WTC11 (cell line): ENCODE measurements at regions of chr9 and their contacts with region 1.

Region 1: GRCh38 chr9:121545875-121546423 is 46.3 kb upstream of the GGTA1 start:
- DNase-seq: peak; percentile 98
- ATAC-seq: peak; percentile 93
- H3K4me3 Mint-ChIP-seq: peak overlapping the region; percentile 33; the same call in 1 of the 2 replicates
- H3K27ac Mint-ChIP-seq: no peak overlapping the region
- H3K4me1 Mint-ChIP-seq: peaks cover 8% of the 10 kb centered on the region
- H3K27me3 Mint-ChIP-seq: peaks cover 17% of the 10 kb centered on the region
- CTCF ChIP-seq: peak; percentile 85

Region 2: GRCh38 chr9:121566481-121567465 is 20.8 kb after region 1 on chr9:
- CTCF ChIA-PET with region 1: interaction called, 16 read pairs
- POLR2A ChIA-PET with region 1: no interaction called
- DNase-seq: no peak
- ATAC-seq: no peak
- H3K4me3 Mint-ChIP-seq: no peak overlapping the region
- H3K27ac Mint-ChIP-seq: peak overlapping the region; percentile 48; the same call in 1 of the 2 replicates
- H3K4me1 Mint-ChIP-seq: peaks cover 20% of the 10 kb centered on the region
- H3K27me3 Mint-ChIP-seq: 0 out of 2 replicates have a peak, but pooled peaks cover 3% of the 10 kb centered on the region
- CTCF ChIP-seq: no peak

Region 3: DNA sequence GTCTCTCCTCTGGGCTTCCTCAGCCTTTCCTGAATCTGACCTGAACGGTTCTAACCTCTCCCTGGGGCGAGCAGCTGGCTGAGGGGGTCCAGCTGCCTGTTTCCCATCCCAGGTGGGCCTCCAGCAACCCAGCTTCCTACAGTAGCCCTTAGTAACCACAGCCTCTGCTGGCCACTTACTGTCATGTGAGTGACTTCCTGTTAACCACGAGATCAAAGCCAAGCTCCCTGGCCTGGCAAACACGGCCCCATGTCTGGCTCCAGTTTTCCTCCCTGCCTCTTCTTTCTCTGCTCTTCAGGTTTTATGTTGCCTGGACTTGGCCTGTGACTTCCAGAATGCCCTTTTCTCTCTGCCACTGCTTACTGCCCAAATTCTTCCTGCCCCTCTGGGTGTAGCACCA is 58.3 kb after region 1 on chr9:
- CTCF ChIA-PET with region 1: interaction called, 38 read pairs
- POLR2A ChIA-PET with region 1: no interaction called
- DNase-seq: no peak
- ATAC-seq: no peak
- H3K4me3 Mint-ChIP-seq: no peak overlapping the region
- H3K27ac Mint-ChIP-seq: peak overlapping the region; percentile 93; the same call in 1 of the 2 replicates
- H3K4me1 Mint-ChIP-seq: peaks cover 40% of the 10 kb centered on the region
- H3K27me3 Mint-ChIP-seq: peaks cover 14% of the 10 kb centered on the region
- CTCF ChIP-seq: no peak

Region 4: DNA sequence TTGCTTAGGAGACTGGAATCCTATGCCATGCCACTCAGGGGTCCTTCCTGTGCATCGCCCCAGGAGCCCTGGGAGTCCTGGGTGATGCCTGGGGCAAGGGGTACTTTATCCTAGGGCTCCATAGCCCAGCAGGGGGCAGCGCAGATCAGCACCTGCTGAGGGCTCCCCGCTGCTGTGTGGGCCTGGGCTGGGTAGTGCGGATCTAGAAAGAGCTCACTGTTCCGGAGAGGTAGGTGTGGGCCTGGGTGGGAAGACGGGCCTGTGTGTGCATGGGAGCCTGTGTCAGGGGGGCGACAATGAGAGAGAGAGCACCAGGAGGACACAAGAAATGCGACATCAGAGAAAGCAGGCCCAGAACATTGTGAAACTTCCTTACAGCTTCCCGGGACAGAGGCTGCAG is 94.1 kb after region 1 on chr9:
- CTCF ChIA-PET with region 1: interaction called, 19 read pairs
- POLR2A ChIA-PET with region 1: no interaction called
- DNase-seq: peak; percentile 76
- ATAC-seq: peak; percentile 75
- H3K4me3 Mint-ChIP-seq: no peak overlapping the region
- H3K27ac Mint-ChIP-seq: 0 out of 2 replicates have a peak overlapping the region, but pooled peaks have one; percentile 23
- H3K4me1 Mint-ChIP-seq: peaks cover 40% of the 10 kb centered on the region
- H3K27me3 Mint-ChIP-seq: no peaks in the 10 kb centered on the region
- CTCF ChIP-seq: no peak; the same call in 1 of the 2 replicates

Region 5: DNA sequence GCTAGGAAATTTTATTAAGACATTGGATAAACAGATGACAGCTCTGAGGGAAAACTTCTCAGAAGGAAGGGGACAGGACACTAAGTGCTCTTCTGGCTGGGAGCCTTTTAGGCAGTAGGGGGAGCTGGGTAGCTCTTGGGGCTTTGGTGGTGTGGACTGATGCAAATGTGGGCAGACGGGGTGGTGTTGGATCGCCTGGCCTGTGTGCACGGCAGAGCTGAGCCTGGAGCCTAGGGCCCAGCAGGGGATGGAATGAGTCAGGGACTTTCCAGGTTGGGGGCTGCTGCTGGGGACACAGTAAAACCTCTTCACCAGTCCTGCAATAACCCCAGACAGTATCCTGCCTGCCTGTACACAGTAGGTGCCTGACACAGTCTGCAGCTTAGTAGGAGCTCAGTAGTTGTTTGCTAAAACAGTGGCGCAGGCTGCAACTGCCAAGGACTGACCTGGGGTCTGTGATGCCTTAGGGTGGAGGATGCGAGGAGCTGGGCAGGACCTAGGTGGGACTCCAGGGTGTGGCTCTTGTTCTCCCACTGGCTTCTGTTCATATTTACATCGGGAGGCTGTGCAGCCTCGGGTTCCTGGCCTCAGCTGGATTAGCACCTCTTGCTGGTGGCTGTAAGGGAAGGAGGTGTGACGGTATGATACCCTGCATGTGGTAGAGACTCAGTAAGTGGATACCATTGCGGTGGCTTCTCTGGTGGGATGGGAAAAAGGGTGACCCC is 189.3 kb after region 1 on chr9:
- CTCF ChIA-PET with region 1: interaction called, 25 read pairs
- POLR2A ChIA-PET with region 1: no interaction called
- DNase-seq: peak; percentile 76
- ATAC-seq: peak; percentile 81
- H3K4me3 Mint-ChIP-seq: peak overlapping the region; percentile 85
- H3K27ac Mint-ChIP-seq: peak overlapping the region; percentile 86
- H3K4me1 Mint-ChIP-seq: peaks cover 66% of the 10 kb centered on the region
- H3K27me3 Mint-ChIP-seq: peaks cover 3% of the 10 kb centered on the region; the same call in 1 of the 2 replicates
- CTCF ChIP-seq: no peak; the same call in 1 of the 2 replicates

Region 6: DNA sequence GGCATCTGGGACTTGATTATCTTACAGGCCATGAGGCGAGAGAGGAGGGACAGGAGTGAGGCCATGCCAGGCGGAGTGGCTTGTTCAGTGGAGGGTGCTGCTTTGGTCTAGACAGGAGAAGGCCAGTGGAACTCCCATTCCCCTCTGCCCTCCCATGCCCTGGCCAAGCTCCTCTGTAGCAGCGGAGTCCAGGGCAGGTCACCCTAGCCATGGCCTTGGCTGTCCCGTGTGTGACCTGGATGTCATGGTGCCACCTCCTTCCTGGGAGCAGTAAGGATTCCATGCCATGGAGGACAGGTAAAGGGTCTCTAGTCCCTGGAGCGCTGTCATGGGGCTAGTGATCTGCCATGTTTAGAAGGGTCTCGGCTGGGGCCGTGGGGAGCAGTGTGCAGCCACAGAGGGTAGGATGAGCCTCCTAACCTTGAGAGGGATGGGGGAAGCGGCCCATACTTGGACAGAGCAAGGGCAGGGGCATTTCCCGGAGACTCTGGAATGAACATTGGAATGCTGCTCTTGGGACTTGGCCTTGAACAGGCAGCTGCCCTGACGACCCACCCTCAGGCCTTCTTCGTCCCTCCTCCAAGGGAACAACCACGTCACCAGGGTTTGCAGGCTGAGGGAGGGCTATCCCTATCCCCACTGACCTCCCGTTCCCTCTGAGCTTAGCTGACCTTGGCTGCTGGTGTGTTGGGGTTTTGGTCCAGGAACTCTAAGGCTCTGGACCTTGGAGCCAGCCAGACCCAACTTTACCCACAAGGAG is 205.9 kb after region 1 on chr9:
- CTCF ChIA-PET with region 1: no interaction called
- POLR2A ChIA-PET with region 1: no interaction called
- DNase-seq: no peak
- ATAC-seq: no peak
- H3K4me3 Mint-ChIP-seq: no peak overlapping the region
- H3K27ac Mint-ChIP-seq: peak overlapping the region; percentile 60
- H3K4me1 Mint-ChIP-seq: 0 out of 2 replicates have a peak, but pooled peaks cover 2% of the 10 kb centered on the region
- H3K27me3 Mint-ChIP-seq: no peaks in the 10 kb centered on the region
- CTCF ChIP-seq: no peak

Region 7: GRCh38 chr9:121989010-121989409 is 443.1 kb after region 1 on chr9:
- CTCF ChIA-PET with region 1: interaction called, 19 read pairs
- POLR2A ChIA-PET with region 1: no interaction called
- DNase-seq: peak; percentile 76
- ATAC-seq: peak; percentile 94
- H3K4me3 Mint-ChIP-seq: no peak overlapping the region
- H3K27ac Mint-ChIP-seq: no peak overlapping the region
- H3K4me1 Mint-ChIP-seq: no peaks in the 10 kb centered on the region
- H3K27me3 Mint-ChIP-seq: peaks cover 17% of the 10 kb centered on the region
- CTCF ChIP-seq: no peak